ENCODE measurements at regions of chr7 and their contacts with region 1.

Region 1: DNA sequence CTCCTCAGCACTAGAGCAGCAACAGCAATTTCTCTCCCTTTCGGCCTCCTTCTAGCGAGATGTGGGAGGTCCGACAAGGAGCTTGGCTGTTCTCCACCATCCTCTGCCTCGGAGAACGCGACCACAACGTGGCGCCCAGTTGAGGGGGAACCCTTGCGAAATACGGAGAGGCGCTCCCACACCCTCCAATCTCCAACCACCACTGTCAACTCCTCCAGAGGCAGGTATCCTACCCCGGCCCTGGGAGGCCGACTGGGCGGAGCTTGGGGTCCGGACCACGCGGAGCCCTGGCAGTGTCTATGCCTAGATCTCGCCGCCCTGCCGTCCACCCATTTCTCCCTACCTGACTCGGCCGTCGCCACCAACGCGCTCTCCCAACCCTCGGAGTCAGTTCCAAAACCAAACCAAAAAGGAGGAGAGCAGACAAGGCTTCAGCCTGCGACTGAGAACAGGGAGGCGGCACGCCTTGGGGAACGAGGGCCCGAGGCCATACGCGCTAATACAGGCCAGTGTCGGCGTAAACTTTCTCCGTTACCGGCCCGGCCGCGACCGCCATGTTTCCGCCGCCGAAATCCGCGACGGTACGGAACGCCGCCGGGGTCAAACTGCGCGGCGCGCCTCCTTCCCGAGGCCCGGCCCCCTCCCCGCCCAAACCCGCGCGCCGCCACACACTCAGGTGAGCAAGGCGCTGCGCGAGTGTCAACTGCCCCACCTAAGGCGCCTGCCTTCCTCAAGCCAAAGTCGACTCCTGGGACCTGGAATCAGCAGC is at the start of gene TMEM168:
- DNase-seq: peak; percentile 89 to 92 (median 90)
- ATAC-seq: peak; percentile 91
- H3K4me3 ChIP-seq: peak within 1 kb of the TSS; percentile 64
- H3K27ac ChIP-seq: peak within 1 kb of the TSS; percentile 94
- H3K4me1 ChIP-seq: peaks cover 8 to 18% of the 10 kb centered on the region in 2 experiments
- H3K27me3 ChIP-seq: no peaks in the 10 kb centered on the region
- CTCF ChIP-seq: peak in 2 of 3 experiments; percentile 15 to 29; a peak in 2 of 6 replicates
- EP300 ChIP-seq: peak; percentile 24
- POLR2A ChIP-seq: peak; percentile 98
- RAD21 ChIP-seq: no peak; a peak in 1 of 4 replicates
- polyA plus RNA-seq, gene TMEM168: 28.0 to 30.0 TPM

Region 2: GRCh38 chr7:112571852-112572607 is 218.0 kb before region 1 on chr7:
- CTCF ChIA-PET with region 1: no interaction called
- POLR2A ChIA-PET with region 1: no interaction called
- in situ Hi-C with region 1: no loop called
- intact Hi-C with region 1: loop called (anchors 2 kb)
- DNase-seq: peak in 2 of 4 experiments; percentile 39 to 54
- ATAC-seq: peak; percentile 84
- H3K4me3 ChIP-seq: no peak overlapping the region
- H3K27ac ChIP-seq: no peak overlapping the region; the same call in 2 of the 3 replicates
- H3K4me1 ChIP-seq: peaks cover 4 to 29% of the 10 kb centered on the region in 2 experiments; a peak in 4 of 5 replicates
- H3K27me3 ChIP-seq: no peaks in the 10 kb centered on the region
- CTCF ChIP-seq: peak; percentile 39 to 58 (median 42); a peak in 5 of 6 replicates
- EP300 ChIP-seq: no peak; the same call in 1 of the 2 replicates
- POLR2A ChIP-seq: no peak
- RAD21 ChIP-seq: peak in 1 of 2 experiments; percentile 45; a peak in 3 of 4 replicates

Region 3: DNA sequence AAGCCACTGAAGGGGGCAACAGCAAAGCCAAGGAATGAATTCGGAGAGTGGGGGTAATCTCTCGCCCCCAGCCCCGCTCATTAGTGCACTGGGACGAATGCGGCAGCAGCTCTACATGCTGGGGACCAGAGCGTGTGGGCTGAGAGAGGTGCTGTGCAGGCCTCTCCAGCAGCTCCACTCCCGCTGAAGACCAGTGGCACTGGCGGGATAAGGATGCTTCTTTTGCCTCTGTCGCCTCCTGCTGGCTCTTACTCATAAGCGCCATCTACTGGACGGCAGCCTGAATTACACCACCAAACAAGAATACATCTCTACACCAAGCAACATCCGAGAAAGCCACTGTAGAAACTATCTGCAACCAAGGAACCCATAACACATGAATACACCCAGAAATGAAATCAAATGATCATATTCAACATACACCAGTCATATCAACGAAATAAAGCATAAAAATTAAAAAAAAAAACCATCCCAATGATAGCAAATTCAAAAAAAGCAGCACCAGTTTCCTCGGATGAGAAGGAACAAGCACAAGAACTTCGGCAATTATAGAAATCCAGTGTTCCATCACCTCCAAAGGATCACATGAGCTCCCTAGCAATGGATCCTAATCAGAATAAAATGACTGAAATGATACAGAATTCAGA is 79.2 kb after region 1 on chr7:
- CTCF ChIA-PET with region 1: no interaction called
- POLR2A ChIA-PET with region 1: no interaction called
- in situ Hi-C with region 1: no loop called
- intact Hi-C with region 1: loop called (anchors 2 kb)
- DNase-seq: peak; percentile 79 to 84 (median 82)
- ATAC-seq: peak; percentile 97
- H3K4me3 ChIP-seq: no peak overlapping the region
- H3K27ac ChIP-seq: no peak overlapping the region
- H3K4me1 ChIP-seq: no peaks in the 10 kb centered on the region; a peak in 1 of 5 replicates
- H3K27me3 ChIP-seq: no peaks in the 10 kb centered on the region
- CTCF ChIP-seq: peak; percentile 99 to 100 (median 100)
- EP300 ChIP-seq: no peak
- POLR2A ChIP-seq: no peak
- RAD21 ChIP-seq: peak; percentile 74 to 95

Region 4: DNA sequence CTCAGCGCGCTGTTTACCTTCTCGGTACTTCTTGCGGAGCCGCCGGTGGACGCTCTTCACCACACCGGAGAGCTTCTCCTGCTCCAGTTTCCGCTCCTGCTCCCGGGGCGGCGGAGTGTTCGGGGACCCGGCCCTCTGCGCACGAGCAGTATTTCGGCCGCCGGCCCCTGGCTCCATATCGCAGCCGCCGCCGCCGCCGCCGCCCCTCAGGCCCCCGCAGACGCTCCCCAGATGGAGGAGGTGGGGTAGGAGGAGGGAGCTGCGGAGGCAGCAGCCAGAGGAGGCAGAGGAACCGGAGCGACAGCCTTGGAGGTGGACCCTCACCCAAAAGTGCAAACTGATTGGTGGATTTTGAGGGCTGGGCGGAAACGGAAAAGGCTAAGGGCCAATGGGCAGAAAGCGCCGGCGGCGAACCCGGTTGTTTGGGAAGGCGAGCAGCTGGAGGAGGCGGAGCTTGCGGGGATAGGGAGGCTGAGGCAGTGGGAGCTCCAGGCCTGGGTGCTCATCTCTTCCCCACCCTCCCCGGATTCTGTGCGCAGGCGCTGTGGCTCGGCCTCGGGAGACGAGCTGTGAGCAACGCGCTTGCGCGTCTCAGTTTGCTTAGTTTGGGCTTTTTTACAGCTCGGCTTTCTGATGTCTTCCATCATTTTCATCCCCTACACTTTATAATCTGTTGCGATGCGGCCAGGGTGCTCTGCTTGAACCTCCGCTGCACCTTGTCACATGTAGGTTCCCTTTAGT is 149.7 kb after region 1 on chr7:
- CTCF ChIA-PET with region 1: no interaction called
- POLR2A ChIA-PET with region 1: no interaction called
- in situ Hi-C with region 1: no loop called
- intact Hi-C with region 1: loop called (anchors 5 kb)
- DNase-seq: peak; percentile 100
- ATAC-seq: peak; percentile 99
- H3K4me3 ChIP-seq: peak overlapping the region; percentile 81
- H3K27ac ChIP-seq: peak overlapping the region; percentile 80
- H3K4me1 ChIP-seq: peaks cover 3 to 7% of the 10 kb centered on the region in 2 experiments; a peak in 3 of 5 replicates
- H3K27me3 ChIP-seq: no peaks in the 10 kb centered on the region
- CTCF ChIP-seq: no peak
- EP300 ChIP-seq: no peak
- POLR2A ChIP-seq: peak; percentile 90; the same call in 1 of the 2 replicates
- RAD21 ChIP-seq: peak in 1 of 2 experiments; percentile 29; a peak in 1 of 4 replicates

Region 5: GRCh38 chr7:113118074-113118959 is 328.3 kb after region 1 on chr7 and contains the start of gene SMIM30:
- CTCF ChIA-PET with region 1: no interaction called
- POLR2A ChIA-PET with region 1: no interaction called
- in situ Hi-C with region 1: no loop called
- intact Hi-C with region 1: loop called (anchors 10 kb)
- DNase-seq: peak; percentile 89 to 99 (median 93)
- ATAC-seq: peak; percentile 99
- H3K4me3 ChIP-seq: peak within 1 kb of the TSS; percentile 59
- H3K27ac ChIP-seq: peak within 1 kb of the TSS; percentile 75
- H3K4me1 ChIP-seq: peaks cover 0 to 23% of the 10 kb centered on the region in 2 experiments; a peak in 3 of 5 replicates
- H3K27me3 ChIP-seq: no peaks in the 10 kb centered on the region
- CTCF ChIP-seq: peak in 2 of 3 experiments; percentile 10 to 18; a peak in 1 of 6 replicates
- EP300 ChIP-seq: peak; percentile 22; the same call in 1 of the 2 replicates
- POLR2A ChIP-seq: peak; percentile 96
- RAD21 ChIP-seq: no peak; a peak in 1 of 4 replicates
- polyA plus RNA-seq, gene SMIM30: 675 to 891 TPM